A673 (cell line): ENCODE measurements at regions of chr3 and their contacts with region 1.

Region 1: GRCh38 chr3:170180908-170181879 is at the start of gene PHC3:
- DNase-seq: peak; percentile 96
- H3K4me3 ChIP-seq: peak within 1 kb of the TSS; percentile 82
- H3K27ac ChIP-seq: peak within 1 kb of the TSS; percentile 93
- H3K4me1 ChIP-seq: peaks cover 6% of the 10 kb centered on the region
- H3K27me3 ChIP-seq: no peaks in the 10 kb centered on the region
- CTCF ChIP-seq: no peak
- total RNA-seq, gene PHC3: 49.2 and 55.4 TPM in 2 replicates

Region 2: DNA sequence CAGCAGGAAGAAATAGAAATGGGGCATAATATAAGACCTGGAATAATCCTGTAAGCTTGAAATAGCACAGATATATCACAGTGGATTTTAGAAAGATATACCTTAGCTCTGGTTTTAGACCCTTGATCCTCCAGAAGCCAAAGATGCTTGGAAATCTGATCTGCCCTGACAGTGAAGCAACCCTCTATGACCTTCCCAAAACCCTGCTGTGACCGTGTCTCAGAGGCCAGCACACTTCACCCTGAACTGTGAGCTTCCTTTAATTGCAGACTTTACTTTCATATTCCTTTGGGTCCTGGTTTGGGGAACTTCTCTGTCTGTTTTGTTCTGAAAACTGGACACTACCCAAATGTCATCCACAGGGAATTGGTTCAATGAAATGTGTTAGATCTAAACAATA is 530.7 kb before region 1 on chr3:
- CTCF ChIA-PET with region 1: no interaction called
- POLR2A ChIA-PET with region 1: no interaction called
- intact Hi-C with region 1: no loop called
- DNase-seq: no peak
- H3K4me3 ChIP-seq: no peak overlapping the region
- H3K27ac ChIP-seq: no peak overlapping the region
- H3K4me1 ChIP-seq: no peaks in the 10 kb centered on the region
- H3K27me3 ChIP-seq: peaks cover 71% of the 10 kb centered on the region
- CTCF ChIP-seq: no peak

Region 3: GRCh38 chr3:170007031-170007663 is 174.0 kb before region 1 on chr3:
- CTCF ChIA-PET with region 1: no interaction called
- POLR2A ChIA-PET with region 1: no interaction called
- intact Hi-C with region 1: no loop called
- DNase-seq: no peak
- H3K4me3 ChIP-seq: no peak overlapping the region
- H3K27ac ChIP-seq: no peak overlapping the region
- H3K4me1 ChIP-seq: no peaks in the 10 kb centered on the region
- H3K27me3 ChIP-seq: no peaks in the 10 kb centered on the region
- CTCF ChIP-seq: no peak

Region 4: DNA sequence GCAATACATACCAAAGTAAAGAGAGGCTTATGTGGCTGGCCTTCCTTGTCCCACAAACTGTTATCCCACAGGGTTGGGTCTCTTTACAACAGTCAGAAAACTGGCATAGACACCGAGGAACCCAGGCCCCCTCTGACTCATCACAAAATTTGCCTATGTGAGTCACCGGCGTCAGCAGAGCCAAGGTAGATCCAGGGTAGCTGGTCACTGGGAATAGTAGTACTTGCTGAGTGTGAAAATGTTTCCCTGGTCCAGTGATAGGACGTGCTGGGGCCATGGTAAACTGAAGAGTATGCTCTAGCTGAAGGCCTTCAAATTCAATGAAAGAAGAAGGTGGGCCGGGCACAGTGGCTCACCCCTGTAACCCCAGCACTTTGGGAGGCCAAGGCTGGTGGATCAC is 149.2 kb after region 1 on chr3:
- CTCF ChIA-PET with region 1: no interaction called
- POLR2A ChIA-PET with region 1: no interaction called
- intact Hi-C with region 1: no loop called
- DNase-seq: peak; percentile 19
- H3K4me3 ChIP-seq: no peak overlapping the region
- H3K27ac ChIP-seq: no peak overlapping the region
- H3K4me1 ChIP-seq: no peaks in the 10 kb centered on the region
- H3K27me3 ChIP-seq: no peaks in the 10 kb centered on the region
- CTCF ChIP-seq: no peak

Region 5: DNA sequence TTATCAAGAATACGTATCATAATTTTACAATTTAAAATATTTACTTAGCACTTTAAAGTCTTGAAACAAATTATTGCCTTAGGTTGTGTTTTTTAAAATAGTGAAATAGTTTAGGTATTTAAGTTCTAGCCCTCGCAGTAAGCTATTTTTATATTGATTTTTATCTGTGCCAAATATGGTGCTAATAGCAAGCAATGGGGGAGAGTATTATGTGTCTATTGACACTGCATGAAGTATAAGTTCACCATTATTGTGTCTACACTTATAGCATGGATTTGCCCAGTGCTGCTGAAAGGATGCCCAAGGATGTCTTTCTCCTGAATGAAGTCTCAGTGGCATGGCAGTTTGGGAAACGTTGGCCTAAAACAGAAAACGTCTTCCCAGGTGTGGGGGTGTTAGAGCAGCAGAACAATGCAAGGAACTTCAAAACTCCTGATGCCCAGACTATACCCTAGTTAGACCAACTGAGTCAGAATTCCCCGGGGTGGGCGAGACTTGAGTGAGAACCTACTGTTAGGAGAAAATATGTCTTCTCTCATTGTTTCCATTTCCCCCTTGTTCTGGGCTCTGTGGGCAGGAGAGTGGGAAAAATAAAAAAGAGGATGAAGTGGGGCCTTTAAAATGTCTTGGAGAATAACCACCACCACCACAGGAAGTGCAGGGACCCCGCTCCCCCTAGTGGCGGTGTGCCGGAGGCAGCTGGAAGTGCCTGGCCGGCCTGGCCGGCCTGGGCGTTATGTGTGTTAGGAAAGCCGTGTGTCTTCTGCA is 508.9 kb after region 1 on chr3:
- CTCF ChIA-PET with region 1: no interaction called
- POLR2A ChIA-PET with region 1: no interaction called
- intact Hi-C with region 1: loop called (anchors 10 kb)
- DNase-seq: peak; percentile 67
- H3K4me3 ChIP-seq: no peak overlapping the region
- H3K27ac ChIP-seq: no peak overlapping the region
- H3K4me1 ChIP-seq: no peaks in the 10 kb centered on the region
- H3K27me3 ChIP-seq: no peaks in the 10 kb centered on the region
- CTCF ChIP-seq: peak; percentile 86